ENCODE measurements at regions of chr15 and their contacts with region 1.

Region 1: DNA sequence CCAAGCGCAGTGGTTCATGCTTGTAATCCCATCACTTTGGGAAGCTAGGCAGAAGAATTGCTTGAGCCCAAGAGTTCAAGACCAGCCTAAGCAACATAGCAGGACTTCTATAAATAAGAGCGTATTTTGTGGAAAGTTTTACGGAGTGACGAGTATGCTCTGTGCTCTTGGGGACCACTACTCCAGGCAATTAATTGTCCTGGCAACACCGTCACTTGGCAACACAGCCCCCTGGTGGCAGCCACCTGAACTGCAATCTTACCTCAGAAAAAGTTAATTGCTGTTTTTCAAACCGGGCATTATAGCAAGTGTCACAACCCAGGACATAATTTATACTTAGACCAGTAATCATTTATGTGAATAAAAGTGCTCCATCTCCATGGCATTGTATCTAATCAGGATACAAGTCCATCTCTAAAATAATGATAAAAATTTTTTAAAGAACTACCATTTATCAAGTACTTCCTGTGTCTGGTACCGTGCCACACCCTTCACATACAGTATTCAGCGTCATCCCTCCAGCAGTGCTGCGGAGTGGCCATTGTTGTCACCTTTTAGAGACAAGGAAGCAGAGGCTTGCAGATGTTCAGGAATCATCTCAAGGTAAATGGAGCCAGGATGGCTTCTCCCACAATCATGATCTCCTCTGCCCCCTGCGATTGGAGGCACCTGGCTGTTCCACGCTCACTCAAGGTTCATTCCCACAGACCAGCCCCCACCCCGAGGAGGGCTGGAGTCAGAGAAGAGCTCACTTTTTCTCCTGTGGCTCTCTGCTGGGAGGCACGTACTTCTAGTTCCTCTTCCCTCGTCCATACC is 34.5 kb downstream of the PLA2G4D start:
- DNase-seq: peak; percentile 73
- CTCF ChIP-seq: peak; percentile 90

Region 2: GRCh38 chr15:41989934-41990605 is 69.8 kb before region 1 on chr15:
- in situ Hi-C with region 1: loop called (anchors 5 kb)
- DNase-seq: no peak
- CTCF ChIP-seq: no peak

Region 3: DNA sequence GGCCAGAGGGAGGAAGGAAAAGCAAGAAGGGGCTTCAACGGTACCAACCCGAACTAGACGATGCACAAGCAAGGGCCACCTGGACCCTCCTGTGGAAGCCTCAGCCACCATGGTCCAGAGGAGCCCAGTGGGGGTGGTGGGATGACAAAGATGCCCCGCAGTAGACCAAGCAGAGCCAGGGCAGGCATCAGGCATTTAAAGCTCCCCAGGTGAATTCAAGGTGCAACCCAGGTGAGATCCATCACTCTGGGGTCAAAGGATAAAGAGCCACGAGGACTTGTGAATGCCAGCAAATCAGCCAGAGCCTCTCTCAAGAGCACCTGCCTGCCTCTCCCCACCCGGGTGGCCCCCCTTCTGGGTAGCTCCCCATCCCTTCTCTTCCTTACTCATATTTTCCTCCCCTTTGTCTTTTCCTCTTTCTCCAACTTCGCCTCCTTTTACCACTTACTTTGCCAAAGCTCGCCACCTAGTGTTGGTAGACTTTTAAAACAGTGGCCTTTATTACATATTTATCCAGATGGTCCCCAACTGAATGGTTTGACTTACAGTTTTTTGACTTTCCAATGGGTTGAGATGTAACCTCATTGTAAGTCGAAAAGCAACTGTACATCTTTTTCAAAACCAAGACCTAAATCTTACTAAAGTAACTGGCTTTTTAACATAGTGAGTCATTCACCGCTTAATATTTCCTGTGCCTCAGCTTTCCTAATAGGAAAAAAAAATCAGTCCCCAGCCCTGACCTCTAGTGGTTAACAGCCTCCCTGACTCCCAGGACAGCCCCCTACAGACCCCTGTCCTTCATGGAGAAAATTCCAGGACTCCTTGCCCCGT is 77.8 kb after region 1 on chr15:
- in situ Hi-C with region 1: loop called (anchors 10 kb)
- DNase-seq: peak; percentile 61
- CTCF ChIP-seq: peak; percentile 63

Region 4: GRCh38 chr15:42306671-42307070 is 246.8 kb after region 1 on chr15:
- in situ Hi-C with region 1: no loop called
- DNase-seq: no peak
- CTCF ChIP-seq: no peak